ENCODE measurements at regions of chr19 and their contacts with region 1.

Region 1: DNA sequence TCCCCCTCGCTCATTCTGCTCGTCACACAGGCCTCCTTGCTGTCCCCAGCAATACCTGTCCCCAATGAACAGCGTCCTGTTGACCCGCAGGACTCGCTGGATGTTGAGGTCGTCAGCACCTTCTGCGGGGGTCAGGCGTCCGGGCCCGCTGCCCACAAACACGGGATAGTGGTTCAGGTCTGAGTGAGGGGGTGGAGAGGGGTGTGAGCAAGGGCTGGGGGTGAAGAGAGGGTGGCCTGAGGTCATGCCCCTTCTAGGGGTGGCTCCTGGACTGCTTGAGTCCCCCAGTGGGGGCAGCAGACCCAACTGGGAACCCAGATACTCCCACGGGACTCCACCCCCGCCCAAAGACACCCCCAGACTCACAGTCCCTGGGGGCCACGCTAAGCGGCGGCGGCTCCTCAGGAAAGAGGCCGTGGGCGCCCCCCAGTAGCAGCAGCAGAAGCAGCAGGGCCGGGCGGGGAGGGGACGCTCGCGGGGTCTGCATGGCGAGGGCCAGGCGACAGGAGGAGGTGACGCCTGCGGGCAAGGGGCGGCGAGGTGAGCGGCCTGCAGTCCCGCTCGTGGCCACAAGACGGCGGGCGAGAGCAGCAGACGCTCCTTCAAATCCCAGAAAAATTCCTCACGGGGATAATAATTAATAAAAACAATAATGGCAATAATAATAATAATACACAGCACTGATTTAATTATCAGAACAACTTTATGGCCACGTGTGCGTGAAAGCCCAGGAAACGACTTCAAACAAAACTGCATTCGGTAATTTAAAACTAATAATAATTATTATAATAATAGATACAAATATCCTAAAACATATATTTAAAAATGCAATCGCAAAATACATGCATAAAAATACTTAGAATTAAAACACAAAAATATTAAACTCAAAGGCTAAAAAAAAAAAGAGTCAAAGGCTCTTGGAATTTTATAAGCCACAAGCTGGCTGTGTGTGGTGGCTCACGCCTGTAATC is 1.2 kb downstream of the SEMA6B start:
- DNase-seq: no peak
- ATAC-seq: no peak
- H3K4me3 ChIP-seq: peak overlapping the region in 3 of 4 donors; percentile 36 to 54 (median 49)
- H3K27ac ChIP-seq: peak overlapping the region; percentile 33 to 81 (median 70)
- H3K4me1 ChIP-seq: no peaks in the 10 kb centered on the region
- H3K27me3 ChIP-seq: no peaks in the 10 kb centered on the region
- CTCF ChIP-seq: peak; percentile 92 to 100 (median 97)
- POLR2A ChIP-seq: no peak

Region 2: DNA sequence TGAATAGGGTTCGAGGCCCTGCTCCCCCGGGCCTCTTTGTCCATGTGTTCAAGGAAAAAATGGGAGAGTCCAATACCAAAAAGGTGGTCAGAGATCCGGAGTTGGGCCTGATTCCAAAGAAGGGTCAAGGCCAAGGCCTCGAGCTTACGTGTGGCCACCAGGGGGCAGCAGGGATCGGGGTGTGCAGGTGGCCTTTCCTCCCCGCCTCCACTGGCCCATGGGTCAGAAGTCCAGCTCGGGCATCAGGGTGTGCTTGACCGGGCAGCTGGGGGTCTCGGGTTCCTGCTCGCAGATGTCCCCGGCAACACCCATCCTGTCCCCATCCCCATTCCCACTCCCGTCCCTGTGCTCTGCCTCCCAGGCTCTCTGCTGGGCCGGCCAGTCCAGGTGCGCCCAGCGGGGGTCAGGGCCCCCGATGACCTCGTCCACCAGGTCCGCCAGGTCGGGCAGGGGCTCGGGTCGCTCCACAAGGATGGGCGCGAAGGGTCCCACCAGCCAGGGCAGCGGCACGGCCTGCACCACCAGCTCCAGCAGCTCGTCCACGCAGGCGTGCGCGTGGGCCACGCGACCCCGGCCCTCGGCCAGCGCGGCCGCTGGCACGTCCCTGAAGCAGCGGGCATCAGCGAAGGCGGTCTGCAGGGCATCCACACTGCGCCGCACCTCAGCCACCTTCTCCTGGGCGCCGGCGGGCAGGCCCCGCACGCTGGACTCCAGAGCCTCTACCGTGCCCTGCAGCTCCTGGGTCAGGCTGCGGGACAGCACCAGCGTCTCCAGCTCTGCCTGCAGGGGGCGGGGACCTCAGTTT is 34.7 kb before region 1 on chr19:
- in situ Hi-C with region 1: no loop called
- intact Hi-C with region 1: loop called (anchors 1 kb)
- DNase-seq: peak; percentile 35 to 70
- ATAC-seq: peak in 1 of 2 donors; percentile 14
- H3K4me3 ChIP-seq: no peak overlapping the region
- H3K27ac ChIP-seq: peak overlapping the region; percentile 43 to 97 (median 68)
- H3K4me1 ChIP-seq: peaks cover 11 to 13% of the 10 kb centered on the region in 2 donors
- H3K27me3 ChIP-seq: no peaks in the 10 kb centered on the region
- CTCF ChIP-seq: peak; percentile 26 to 87 (median 73)
- POLR2A ChIP-seq: no peak